Activated CD4-positive, alpha-beta memory T cell treated with anti-CD3 and anti-CD28 coated beads, Interleukin-2, amount 10 ng/mL, durations not matched to agents 7 days and 5 days (primary cell): ENCODE measurements at regions of chr4 and their contacts with region 1.

Region 1: DNA sequence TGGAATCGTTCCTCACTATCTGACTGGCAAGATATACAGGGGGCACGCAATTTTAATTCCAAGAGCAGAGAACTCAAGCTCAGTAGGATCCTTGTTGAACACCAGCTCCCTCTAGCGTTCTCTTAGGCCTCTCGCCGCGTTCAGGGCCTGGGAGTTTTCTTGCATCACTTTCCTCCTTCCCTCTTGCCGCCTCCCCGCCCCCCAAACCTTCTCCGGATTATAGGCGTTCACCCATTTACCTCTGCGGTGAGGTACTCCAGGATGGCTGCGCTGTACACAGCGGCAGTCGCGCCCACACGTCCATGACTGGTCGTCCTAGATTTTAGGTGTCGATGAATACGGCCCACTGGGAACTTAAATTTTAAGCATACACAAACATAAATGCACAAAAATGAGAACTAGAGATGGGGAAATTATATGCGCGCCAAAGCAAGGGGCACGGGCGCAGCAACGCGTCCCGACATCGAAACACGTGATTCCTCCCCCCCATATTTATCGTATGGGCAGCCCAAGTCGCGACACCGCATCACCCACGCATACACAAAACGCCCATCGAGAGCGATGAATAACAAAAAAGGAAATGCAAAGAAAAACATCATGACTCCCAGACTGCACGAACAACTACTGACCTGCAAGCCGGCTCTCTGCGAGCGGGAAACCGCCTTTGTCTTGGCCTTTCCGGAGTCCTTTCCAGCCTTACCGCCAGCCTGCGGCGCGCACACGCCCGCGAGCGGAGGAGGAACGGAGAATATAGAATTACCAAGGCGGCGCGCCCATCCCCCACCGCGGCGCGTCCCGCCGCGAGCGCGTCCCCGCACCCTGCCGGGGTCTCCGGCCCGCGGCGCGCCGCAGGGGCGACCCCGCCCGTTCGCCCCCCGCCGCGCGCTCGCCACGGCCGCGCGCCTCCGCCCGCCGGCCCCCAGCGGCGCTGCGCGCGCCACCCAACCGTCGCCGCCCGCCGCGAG is 759 bp downstream of the H2AZ1 start:
- DNase-seq: peak; percentile 92
- H3K4me3 Mint-ChIP-seq: no peak overlapping the region
- H3K27ac Mint-ChIP-seq: no peak overlapping the region
- H3K4me1 Mint-ChIP-seq: peaks cover 33% of the 10 kb centered on the region
- H3K27me3 Mint-ChIP-seq: no peaks in the 10 kb centered on the region

Region 2: GRCh38 chr4:99563310-99564186 is 385.8 kb before region 1 on chr4 and contains the start of gene TRMT10A:
- CTCF ChIA-PET with region 1: interaction called, 7 read pairs
- POLR2A ChIA-PET with region 1: interaction called, 20 read pairs
- DNase-seq: peak; percentile 95
- H3K4me3 Mint-ChIP-seq: peak within 1 kb of the TSS; percentile 94
- H3K27ac Mint-ChIP-seq: peak within 1 kb of the TSS; percentile 99
- H3K4me1 Mint-ChIP-seq: peaks cover 31% of the 10 kb centered on the region
- H3K27me3 Mint-ChIP-seq: peaks cover 13% of the 10 kb centered on the region
- total RNA-seq, gene TRMT10A: 8.5 to 10.4 TPM

Region 3: DNA sequence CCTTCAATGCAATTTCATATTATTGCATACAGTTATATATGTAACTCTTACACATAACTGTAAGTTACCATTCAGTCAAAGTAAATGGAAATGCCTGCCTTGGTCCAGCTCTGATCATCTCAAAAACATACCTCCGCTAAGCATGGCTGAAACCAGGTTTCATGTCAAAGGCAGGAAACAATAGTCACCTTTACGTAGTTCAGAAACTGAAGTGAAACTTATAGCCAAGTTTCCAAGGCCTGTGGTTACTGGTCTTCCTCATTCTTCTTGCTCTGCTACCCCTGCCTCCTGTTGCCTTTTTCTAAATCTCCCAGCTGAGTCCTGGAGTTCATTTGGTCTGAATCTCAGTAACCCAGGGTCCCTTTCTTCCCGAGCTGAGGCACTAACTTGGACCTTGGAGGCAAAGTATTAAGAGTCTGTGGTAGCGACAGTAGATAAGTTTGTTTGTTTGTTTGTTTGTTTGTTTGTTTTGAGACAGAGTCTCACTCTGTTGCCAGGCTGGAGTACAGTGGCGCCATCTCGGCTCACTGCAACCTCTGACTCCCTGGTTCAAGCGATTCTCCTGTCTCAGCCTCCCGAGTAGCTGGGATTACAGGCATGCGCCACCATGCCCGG is 101.8 kb before region 1 on chr4:
- CTCF ChIA-PET with region 1: interaction called, 3 read pairs
- POLR2A ChIA-PET with region 1: interaction called, 21 read pairs
- DNase-seq: peak; percentile 34
- H3K4me3 Mint-ChIP-seq: peak overlapping the region; percentile 63
- H3K27ac Mint-ChIP-seq: peak overlapping the region; percentile 96
- H3K4me1 Mint-ChIP-seq: peaks cover 70% of the 10 kb centered on the region
- H3K27me3 Mint-ChIP-seq: no peaks in the 10 kb centered on the region

Region 4: DNA sequence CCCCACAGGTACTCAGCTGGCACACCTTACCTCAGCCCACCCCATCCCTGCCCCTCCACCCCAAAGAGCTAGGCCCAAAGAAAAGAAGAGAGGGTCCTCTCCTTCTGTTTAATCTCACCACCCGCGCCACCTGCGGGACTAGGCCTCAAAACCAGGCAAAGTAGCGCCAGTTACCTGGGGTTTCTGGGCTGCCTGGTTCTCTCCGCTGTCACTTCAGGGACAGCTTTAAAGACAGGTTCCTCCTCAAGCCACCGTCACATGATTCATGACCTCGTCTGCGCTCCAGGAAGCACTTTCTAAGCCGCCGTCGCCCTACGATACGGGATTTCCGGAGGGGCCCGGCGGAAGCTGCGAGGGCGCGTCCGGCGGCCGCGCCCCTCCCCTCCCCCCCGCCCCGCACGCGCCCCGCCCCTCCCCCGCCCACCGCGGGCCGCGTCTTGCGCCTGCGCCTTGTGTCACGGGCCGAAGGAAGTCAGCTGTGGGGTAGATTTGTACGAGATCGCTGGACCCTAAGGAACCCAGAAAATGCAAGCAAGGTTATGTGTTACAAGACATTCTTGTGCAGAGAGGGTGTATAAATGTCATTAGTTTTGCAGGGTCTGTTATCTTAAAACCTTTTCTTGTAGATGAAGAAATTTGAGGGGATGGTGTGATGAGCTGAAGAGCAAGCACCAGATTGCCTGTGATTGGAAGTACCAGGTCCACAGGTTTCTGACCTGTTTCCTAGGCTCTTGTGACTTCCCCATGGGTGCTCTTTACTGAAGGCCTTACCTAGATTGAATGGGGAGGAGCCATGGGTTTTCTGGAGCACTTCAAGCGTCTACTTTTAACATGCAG is 54.9 kb before region 1 on chr4 and contains the start of gene LAMTOR3:
- CTCF ChIA-PET with region 1: interaction called, 11 read pairs
- POLR2A ChIA-PET with region 1: interaction called, 98 read pairs
- DNase-seq: peak; percentile 92
- H3K4me3 Mint-ChIP-seq: peak within 1 kb of the TSS; percentile 98
- H3K27ac Mint-ChIP-seq: peak within 1 kb of the TSS; percentile 91
- H3K4me1 Mint-ChIP-seq: peaks cover 42% of the 10 kb centered on the region
- H3K27me3 Mint-ChIP-seq: no peaks in the 10 kb centered on the region
- total RNA-seq, gene LAMTOR3: 28.1 to 29.2 TPM

Region 5: DNA sequence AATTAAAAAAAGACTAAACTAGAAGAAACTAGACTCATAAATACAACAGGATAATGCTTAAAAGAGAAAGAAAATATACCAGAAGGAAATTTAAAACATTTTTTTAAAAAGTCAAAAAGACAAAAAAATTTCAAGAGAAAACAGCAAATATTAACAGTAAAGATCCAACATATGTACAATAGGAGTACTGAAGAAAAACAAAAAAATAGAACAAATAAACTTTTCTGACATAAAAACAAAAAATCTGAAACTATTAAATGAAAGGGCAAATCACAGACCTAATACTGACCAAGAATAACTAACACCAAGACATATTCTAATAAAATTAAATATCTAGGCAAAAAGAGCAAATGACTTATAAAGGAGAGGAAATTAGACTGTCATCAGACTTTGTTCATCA is 14.4 kb before region 1 on chr4:
- CTCF ChIA-PET with region 1: interaction called, 4 read pairs
- POLR2A ChIA-PET with region 1: interaction called, 22 read pairs
- DNase-seq: no peak
- H3K4me3 Mint-ChIP-seq: no peak overlapping the region
- H3K27ac Mint-ChIP-seq: no peak overlapping the region
- H3K4me1 Mint-ChIP-seq: peaks cover 19% of the 10 kb centered on the region
- H3K27me3 Mint-ChIP-seq: no peaks in the 10 kb centered on the region

Region 6: DNA sequence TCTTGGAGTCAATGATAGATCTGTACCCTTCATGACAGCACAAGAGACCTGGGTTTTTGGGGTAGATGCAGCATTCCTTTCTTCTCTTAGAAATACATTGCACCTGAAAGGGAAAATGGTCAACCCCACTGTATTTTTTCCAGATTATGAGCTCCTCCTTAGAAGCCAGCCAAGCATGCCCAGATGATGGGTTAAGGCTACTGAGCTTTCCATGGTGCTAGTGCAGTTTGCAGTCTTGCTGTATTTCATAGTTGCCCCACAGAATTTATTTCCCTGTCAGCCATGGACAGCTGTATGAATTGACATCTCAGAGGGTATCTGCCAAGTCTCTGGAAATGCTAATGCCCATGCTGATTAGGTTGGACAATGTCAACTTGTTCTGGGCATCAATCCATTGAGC is 74.5 kb after region 1 on chr4:
- CTCF ChIA-PET with region 1: no interaction called
- POLR2A ChIA-PET with region 1: no interaction called
- DNase-seq: no peak
- H3K4me3 Mint-ChIP-seq: no peak overlapping the region
- H3K27ac Mint-ChIP-seq: no peak overlapping the region
- H3K4me1 Mint-ChIP-seq: no peaks in the 10 kb centered on the region
- H3K27me3 Mint-ChIP-seq: peaks cover 3% of the 10 kb centered on the region

Region 7: GRCh38 chr4:100076743-100077142 is 127.4 kb after region 1 on chr4:
- CTCF ChIA-PET with region 1: no interaction called
- POLR2A ChIA-PET with region 1: no interaction called
- DNase-seq: no peak
- H3K4me3 Mint-ChIP-seq: no peak overlapping the region
- H3K27ac Mint-ChIP-seq: no peak overlapping the region
- H3K4me1 Mint-ChIP-seq: peaks cover 5% of the 10 kb centered on the region
- H3K27me3 Mint-ChIP-seq: peaks cover under 1% of the 10 kb centered on the region